CD4-positive, alpha-beta T cell (primary cell): ENCODE measurements at regions of chr3 and their contacts with region 1.

Region 1: GRCh38 chr3:71495708-71496472 is 87.6 kb downstream of the FOXP1 start:
- DNase-seq: peak in 4 of 14 experiments; percentile 41 to 70 (median 57)
- ATAC-seq: no peak
- H3K4me3 ChIP-seq: peak overlapping the region; percentile 33
- H3K4me3 Mint-ChIP-seq: peak overlapping the region; percentile 71
- H3K27ac ChIP-seq: peak overlapping the region; percentile 51 to 64
- H3K27ac Mint-ChIP-seq: peak overlapping the region; percentile 95
- H3K4me1 ChIP-seq: peaks cover 61% of the 10 kb centered on the region
- H3K4me1 Mint-ChIP-seq: peaks cover 90% of the 10 kb centered on the region
- H3K27me3 ChIP-seq: no peaks in the 10 kb centered on the region
- H3K27me3 Mint-ChIP-seq: no peaks in the 10 kb centered on the region
- CTCF ChIP-seq: no peak

Region 2: DNA sequence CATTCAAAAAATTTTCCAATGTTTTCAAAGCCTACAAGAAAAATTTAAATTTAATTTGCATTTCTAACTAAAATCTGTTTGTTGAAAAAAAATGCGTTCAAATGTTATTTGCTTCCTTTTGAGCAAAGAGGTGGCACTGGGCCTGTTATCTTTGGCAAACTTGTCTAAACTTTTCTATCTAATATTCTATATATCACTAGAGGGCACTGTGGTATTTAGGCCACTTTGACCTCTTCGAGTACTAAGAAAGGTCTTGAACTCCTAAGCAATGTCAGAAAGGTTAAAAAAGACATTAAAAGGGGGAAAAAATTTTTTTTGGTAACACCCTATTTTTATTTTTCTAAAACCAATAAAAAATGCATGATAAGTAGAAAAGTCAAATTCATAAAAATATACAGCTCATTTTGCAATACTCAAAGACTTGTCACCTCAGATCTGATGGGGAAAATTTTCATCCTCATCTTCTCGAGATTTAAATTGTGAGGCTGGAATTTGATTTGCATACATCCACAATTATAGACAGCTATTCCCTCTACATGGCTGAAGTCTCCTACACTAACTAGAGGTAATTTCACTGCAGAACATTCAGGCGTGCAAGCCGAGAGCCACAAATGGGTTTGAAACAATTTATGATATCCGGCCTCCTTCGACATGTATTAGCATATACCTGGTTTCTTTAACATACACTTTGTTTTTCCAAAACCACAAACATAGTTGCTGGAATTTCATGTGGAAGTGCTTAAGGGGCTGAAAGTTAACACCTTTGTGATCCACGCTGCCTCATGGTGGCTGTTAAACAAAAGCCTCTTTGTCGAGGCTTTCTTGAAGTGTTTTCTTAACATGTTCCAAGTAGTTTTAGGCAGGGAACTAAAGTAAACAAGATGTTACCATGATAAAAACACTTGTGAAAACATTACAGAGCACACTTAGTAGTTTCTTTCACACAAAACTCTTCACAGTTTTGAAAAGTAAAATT is 488.8 kb before region 1 on chr3:
- CTCF ChIA-PET with region 1: no interaction called
- POLR2A ChIA-PET with region 1: interaction called, 3 read pairs
- intact Hi-C with region 1: loop called in 1 of 2 experiments (anchors 5 kb)
- DNase-seq: peak in 3 of 14 experiments; percentile 61 to 66 (median 63)
- ATAC-seq: no peak
- H3K4me3 ChIP-seq: no peak overlapping the region
- H3K4me3 Mint-ChIP-seq: peak overlapping the region; percentile 22
- H3K27ac ChIP-seq: no peak overlapping the region
- H3K27ac Mint-ChIP-seq: peak overlapping the region; percentile 96
- H3K4me1 ChIP-seq: peaks cover 38% of the 10 kb centered on the region
- H3K4me1 Mint-ChIP-seq: peaks cover 83% of the 10 kb centered on the region
- H3K27me3 ChIP-seq: no peaks in the 10 kb centered on the region
- H3K27me3 Mint-ChIP-seq: no peaks in the 10 kb centered on the region
- CTCF ChIP-seq: peak; percentile 76

Region 3: GRCh38 chr3:71103430-71103921 is 392.4 kb before region 1 on chr3:
- CTCF ChIA-PET with region 1: no interaction called
- POLR2A ChIA-PET with region 1: no interaction called
- intact Hi-C with region 1: no loop called
- DNase-seq: no peak
- ATAC-seq: no peak
- H3K4me3 ChIP-seq: no peak overlapping the region
- H3K4me3 Mint-ChIP-seq: peak overlapping the region; percentile 5
- H3K27ac ChIP-seq: no peak overlapping the region
- H3K27ac Mint-ChIP-seq: peak overlapping the region; percentile 83
- H3K4me1 ChIP-seq: peaks cover 53% of the 10 kb centered on the region
- H3K4me1 Mint-ChIP-seq: peaks cover 95% of the 10 kb centered on the region
- H3K27me3 ChIP-seq: no peaks in the 10 kb centered on the region
- H3K27me3 Mint-ChIP-seq: no peaks in the 10 kb centered on the region
- CTCF ChIP-seq: no peak

Region 4: DNA sequence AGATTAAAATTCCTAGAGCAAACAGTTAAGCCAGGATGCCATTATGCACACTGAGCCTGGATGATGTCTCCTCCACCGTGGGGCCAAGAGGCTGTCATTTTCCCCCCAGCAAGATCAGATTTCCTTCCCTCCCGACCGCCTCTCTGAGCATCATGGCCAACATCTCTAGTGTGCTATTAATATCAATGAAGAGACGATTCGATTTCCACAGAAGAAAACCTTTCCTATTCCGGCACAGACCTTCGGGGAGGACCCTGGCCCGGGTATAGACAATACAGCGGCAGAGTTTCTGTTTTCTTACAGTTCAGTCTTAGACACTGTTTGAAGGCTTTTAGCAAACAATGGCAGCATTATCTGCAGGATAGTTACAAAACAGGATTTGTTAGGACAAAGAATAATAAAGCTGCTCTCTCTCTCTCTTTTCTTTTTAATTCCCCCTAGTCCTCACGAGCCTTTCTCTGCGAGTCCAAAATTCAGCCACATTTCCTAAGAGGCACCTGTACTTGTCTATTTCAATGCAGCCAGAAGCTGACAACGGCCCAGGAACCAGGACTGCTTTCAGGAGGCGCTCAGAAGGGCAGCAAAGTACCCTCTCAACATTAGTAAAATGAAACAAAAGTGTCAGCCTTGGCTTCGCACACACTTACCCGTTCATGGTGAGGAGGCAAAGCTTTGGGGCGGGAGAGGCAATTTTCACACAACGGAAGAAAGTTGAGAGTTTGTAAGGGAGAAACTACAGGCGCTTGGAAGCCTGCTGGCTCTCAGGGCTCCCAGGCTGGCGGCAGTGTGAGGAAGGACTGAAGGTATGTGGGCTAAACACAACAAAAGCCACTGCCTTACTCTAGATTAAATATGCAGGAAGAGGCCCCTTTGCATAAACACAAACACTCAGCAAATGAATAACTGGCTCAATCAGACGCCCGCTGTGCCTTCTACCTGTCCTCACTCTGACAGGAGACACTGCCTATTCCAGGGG is 190.4 kb before region 1 on chr3:
- CTCF ChIA-PET with region 1: no interaction called
- POLR2A ChIA-PET with region 1: no interaction called
- intact Hi-C with region 1: loop called in 1 of 2 experiments (anchors 5 kb)
- DNase-seq: peak in 9 of 14 experiments; percentile 12 to 50 (median 19)
- ATAC-seq: peak; percentile 44
- H3K4me3 ChIP-seq: peak overlapping the region; percentile 60
- H3K4me3 Mint-ChIP-seq: peak overlapping the region; percentile 87
- H3K27ac ChIP-seq: peak overlapping the region; percentile 6 to 69
- H3K27ac Mint-ChIP-seq: peak overlapping the region; percentile 93
- H3K4me1 ChIP-seq: peaks cover 24% of the 10 kb centered on the region
- H3K4me1 Mint-ChIP-seq: peaks cover 96% of the 10 kb centered on the region
- H3K27me3 ChIP-seq: no peaks in the 10 kb centered on the region
- H3K27me3 Mint-ChIP-seq: no peaks in the 10 kb centered on the region
- CTCF ChIP-seq: no peak

Region 5: DNA sequence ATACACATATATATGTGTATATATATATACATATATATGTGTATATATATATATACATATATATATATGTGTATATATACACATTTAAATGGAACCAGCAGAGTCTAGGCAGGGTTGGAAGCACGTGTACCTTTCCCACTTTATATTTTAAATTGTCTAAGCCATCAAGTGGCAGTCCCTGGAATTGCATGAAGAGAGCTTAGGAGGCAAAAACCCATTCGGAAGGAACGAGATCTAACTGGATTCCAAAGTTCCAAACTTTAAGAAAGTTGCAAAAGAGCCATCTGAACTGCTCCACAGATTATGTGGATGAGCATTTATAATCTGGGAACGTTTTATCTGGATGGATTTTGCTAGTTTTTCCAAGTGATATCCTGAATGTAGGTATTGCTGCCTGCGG is 98.8 kb before region 1 on chr3:
- CTCF ChIA-PET with region 1: no interaction called
- POLR2A ChIA-PET with region 1: no interaction called
- intact Hi-C with region 1: loop called in 1 of 2 experiments (anchors 2 kb)
- DNase-seq: peak in 3 of 14 experiments; percentile 36 to 52 (median 47)
- ATAC-seq: no peak
- H3K4me3 ChIP-seq: no peak overlapping the region
- H3K4me3 Mint-ChIP-seq: peak overlapping the region; percentile 40
- H3K27ac ChIP-seq: peak overlapping the region; percentile 21 to 91
- H3K27ac Mint-ChIP-seq: peak overlapping the region; percentile 91
- H3K4me1 ChIP-seq: peaks cover 29% of the 10 kb centered on the region
- H3K4me1 Mint-ChIP-seq: peaks cover 85% of the 10 kb centered on the region
- H3K27me3 ChIP-seq: no peaks in the 10 kb centered on the region
- H3K27me3 Mint-ChIP-seq: no peaks in the 10 kb centered on the region
- CTCF ChIP-seq: peak; percentile 34

Region 6: GRCh38 chr3:71456156-71456555 is 39.7 kb before region 1 on chr3:
- CTCF ChIA-PET with region 1: interaction called, 5 read pairs
- POLR2A ChIA-PET with region 1: interaction called, 37 read pairs
- intact Hi-C with region 1: loop called in 1 of 2 experiments (anchors 5 kb)
- DNase-seq: peak in 4 of 14 experiments; percentile 49 to 64 (median 63)
- ATAC-seq: peak; percentile 37
- H3K4me3 ChIP-seq: peak overlapping the region; percentile 25
- H3K4me3 Mint-ChIP-seq: peak overlapping the region; percentile 78
- H3K27ac ChIP-seq: peak overlapping the region; percentile 72 to 78
- H3K27ac Mint-ChIP-seq: peak overlapping the region; percentile 94
- H3K4me1 ChIP-seq: peaks cover 54% of the 10 kb centered on the region
- H3K4me1 Mint-ChIP-seq: peaks cover 95% of the 10 kb centered on the region
- H3K27me3 ChIP-seq: no peaks in the 10 kb centered on the region
- H3K27me3 Mint-ChIP-seq: no peaks in the 10 kb centered on the region
- CTCF ChIP-seq: peak; percentile 46

Region 7: DNA sequence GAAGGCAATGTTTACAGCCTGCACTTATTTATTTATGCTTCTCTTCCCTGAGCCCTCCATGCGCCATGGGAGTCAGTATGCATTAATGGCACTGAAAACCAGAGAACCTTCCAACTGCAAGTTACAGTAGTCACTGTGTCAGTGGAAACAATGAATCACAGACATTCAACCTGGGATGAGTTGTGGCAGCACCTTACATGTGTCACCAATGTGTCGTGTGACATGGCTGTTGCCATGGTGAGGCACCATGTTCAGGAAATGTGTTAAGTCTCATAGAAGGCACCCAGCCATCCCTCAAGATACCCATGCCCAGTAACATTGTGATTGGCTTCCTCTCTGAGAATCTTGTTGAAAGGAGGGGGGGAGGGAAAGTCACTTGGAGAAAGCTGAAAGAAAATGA is 17.3 kb before region 1 on chr3:
- CTCF ChIA-PET with region 1: no interaction called
- POLR2A ChIA-PET with region 1: interaction called, 11 read pairs
- intact Hi-C with region 1: loop called in 1 of 2 experiments (anchors 2 kb)
- DNase-seq: peak in 11 of 14 experiments; percentile 36 to 78 (median 61)
- ATAC-seq: peak; percentile 85
- H3K4me3 ChIP-seq: no peak overlapping the region
- H3K4me3 Mint-ChIP-seq: peak overlapping the region; percentile 75
- H3K27ac ChIP-seq: no peak overlapping the region
- H3K27ac Mint-ChIP-seq: peak overlapping the region; percentile 95
- H3K4me1 ChIP-seq: peaks cover 47% of the 10 kb centered on the region
- H3K4me1 Mint-ChIP-seq: peaks cover 92% of the 10 kb centered on the region
- H3K27me3 ChIP-seq: no peaks in the 10 kb centered on the region
- H3K27me3 Mint-ChIP-seq: no peaks in the 10 kb centered on the region
- CTCF ChIP-seq: no peak

Region 8: DNA sequence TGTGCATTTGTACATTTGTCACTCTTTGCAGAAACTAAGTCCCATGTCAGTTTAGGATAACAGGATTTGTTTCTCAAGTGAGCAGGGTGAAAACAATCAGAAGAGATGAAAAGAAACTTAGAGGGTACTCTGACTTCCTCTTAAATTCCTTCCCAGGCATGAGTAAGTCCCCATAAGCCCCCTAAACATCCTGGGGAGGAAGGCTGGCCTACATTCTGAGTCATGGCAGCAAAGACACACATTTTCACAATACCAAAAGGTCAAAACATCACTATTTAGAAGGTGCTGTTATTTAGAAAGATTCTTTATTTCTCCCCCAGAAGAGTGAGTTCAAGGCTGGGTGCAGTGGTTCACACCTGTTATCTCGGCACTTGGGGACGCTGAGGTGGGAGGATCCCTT is 95.2 kb after region 1 on chr3:
- CTCF ChIA-PET with region 1: no interaction called
- POLR2A ChIA-PET with region 1: no interaction called
- intact Hi-C with region 1: no loop called
- DNase-seq: no peak
- ATAC-seq: no peak
- H3K4me3 ChIP-seq: no peak overlapping the region
- H3K4me3 Mint-ChIP-seq: no peak overlapping the region
- H3K27ac ChIP-seq: no peak overlapping the region
- H3K27ac Mint-ChIP-seq: no peak overlapping the region
- H3K4me1 ChIP-seq: no peaks in the 10 kb centered on the region
- H3K4me1 Mint-ChIP-seq: peaks cover 8% of the 10 kb centered on the region
- H3K27me3 ChIP-seq: no peaks in the 10 kb centered on the region
- H3K27me3 Mint-ChIP-seq: no peaks in the 10 kb centered on the region
- CTCF ChIP-seq: no peak